Panc1 (cell line): ENCODE measurements at regions of chr7 and their contacts with region 1.

Region 1: DNA sequence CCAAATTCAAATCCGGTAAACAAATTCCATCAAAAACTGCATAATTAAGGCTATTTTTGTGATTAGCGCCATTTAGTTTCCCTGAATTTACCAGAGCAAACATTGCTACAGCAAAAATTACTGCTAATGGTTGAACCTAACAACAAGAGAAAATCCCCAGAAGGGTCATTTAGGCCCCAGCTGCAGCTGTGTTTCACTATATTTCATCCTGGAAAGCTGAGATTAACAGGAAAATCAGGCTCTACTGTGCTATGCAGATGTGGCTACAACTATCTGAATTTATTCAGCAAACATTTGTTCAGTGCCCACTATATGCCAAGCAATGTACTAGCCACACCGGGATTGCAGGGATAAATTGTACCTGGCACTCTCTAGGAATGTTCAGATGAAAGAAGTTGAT is 104.0 kb downstream of the PON1 start:
- DNase-seq: no peak
- ATAC-seq: no peak
- H3K4me3 ChIP-seq: no peak overlapping the region
- H3K27ac ChIP-seq: no peak overlapping the region
- H3K4me1 ChIP-seq: no peaks in the 10 kb centered on the region
- H3K27me3 ChIP-seq: no peaks in the 10 kb centered on the region
- CTCF ChIP-seq: no peak

Region 2: DNA sequence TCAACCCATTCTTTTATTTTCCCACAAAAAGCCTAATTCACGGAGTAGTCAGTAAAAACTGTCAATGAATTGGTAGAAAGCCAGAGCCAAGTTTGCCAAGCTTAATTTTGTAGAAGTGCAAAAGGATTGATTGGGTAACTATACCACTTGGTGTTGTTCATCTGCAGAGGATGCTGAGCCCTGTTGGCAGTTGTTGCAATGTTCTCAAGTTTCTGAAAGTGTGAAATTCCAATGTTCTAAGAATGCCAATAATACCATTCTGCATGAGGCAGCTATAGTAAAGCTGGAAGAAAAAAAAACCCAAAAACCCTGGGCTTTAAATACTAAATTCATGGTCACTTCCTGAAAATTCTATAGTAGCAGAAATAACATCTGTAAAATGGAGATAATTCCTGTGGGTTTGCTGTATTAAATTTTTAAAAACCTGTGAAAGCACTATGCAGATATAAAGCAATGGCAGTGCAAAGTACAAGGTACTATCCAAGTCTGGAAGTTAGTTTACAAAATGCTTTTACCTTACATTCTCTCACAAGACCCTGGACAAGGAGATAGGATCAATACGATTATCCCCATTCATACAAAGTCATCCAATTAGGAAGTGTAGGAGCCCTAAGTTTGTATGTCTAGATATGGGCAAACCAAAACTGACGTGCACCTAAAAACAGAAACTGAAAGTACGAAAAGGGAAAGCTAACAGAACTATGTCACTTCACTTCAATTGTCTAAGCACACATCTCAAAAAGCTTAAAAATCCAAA is 110.1 kb after region 1 on chr7:
- CTCF ChIA-PET with region 1: no interaction called
- POLR2A ChIA-PET with region 1: no interaction called
- in situ Hi-C with region 1: no loop called
- intact Hi-C with region 1: no loop called
- DNase-seq: no peak
- ATAC-seq: no peak
- H3K4me3 ChIP-seq: peak overlapping the region; percentile 7 to 43; a peak in 3 of 4 replicates
- H3K27ac ChIP-seq: no peak overlapping the region
- H3K4me1 ChIP-seq: no peaks in the 10 kb centered on the region
- H3K27me3 ChIP-seq: no peaks in the 10 kb centered on the region
- CTCF ChIP-seq: no peak

Region 3: GRCh38 chr7:95501261-95501832 is 281.0 kb after region 1 on chr7:
- CTCF ChIA-PET with region 1: no interaction called
- POLR2A ChIA-PET with region 1: interaction called, 11 read pairs
- in situ Hi-C with region 1: no loop called
- intact Hi-C with region 1: no loop called
- DNase-seq: no peak
- ATAC-seq: peak; percentile 76
- H3K4me3 ChIP-seq: peak overlapping the region in 1 of 2 experiments; percentile 7; a peak in 1 of 4 replicates
- H3K27ac ChIP-seq: no peak overlapping the region
- H3K4me1 ChIP-seq: no peaks in the 10 kb centered on the region
- H3K27me3 ChIP-seq: no peaks in the 10 kb centered on the region
- CTCF ChIP-seq: no peak

Region 4: DNA sequence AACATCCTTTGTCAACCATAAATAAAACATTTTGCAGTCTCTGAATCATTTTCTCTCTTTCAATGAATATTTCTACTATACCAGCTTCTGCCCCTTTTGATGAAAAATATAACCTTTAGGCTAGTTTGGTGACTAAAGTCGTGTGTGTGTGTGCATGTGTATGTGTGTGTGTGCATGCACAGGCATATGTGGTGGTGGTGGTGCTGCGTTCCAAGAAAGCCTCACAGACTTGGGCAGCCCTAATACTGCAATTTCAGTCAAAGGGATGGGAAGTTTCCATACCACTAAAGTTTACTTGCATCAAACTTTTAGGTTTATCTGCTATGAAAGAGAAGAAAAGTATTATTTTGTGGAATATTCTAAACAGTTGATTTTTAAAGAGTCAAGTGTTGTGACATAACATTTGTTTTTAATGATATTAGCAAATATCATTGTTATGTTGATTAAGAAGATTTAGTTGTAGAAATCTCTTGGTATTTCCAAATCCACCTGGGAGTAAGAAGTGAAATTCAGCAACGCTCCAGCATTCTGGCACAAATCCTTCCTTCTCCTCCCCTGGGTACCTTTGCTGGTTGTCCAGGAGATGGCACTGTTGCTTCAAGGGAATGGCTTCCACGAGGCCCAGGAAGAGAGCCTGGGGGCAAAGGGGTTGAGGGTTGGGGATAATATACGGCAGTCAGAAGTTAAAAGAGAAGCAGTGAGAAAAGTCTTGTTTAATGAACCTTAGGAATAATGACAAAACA is 306.9 kb after region 1 on chr7:
- CTCF ChIA-PET with region 1: no interaction called
- POLR2A ChIA-PET with region 1: no interaction called
- in situ Hi-C with region 1: no loop called
- intact Hi-C with region 1: no loop called
- DNase-seq: peak; percentile 32
- ATAC-seq: peak; percentile 92
- H3K4me3 ChIP-seq: no peak overlapping the region
- H3K27ac ChIP-seq: no peak overlapping the region
- H3K4me1 ChIP-seq: no peaks in the 10 kb centered on the region
- H3K27me3 ChIP-seq: 0 out of 2 replicates have a peak, but pooled peaks cover 3% of the 10 kb centered on the region
- CTCF ChIP-seq: peak; percentile 88